Panc1 (cell line): ENCODE measurements at regions of chr10 and their contacts with region 1.

Region 1: DNA sequence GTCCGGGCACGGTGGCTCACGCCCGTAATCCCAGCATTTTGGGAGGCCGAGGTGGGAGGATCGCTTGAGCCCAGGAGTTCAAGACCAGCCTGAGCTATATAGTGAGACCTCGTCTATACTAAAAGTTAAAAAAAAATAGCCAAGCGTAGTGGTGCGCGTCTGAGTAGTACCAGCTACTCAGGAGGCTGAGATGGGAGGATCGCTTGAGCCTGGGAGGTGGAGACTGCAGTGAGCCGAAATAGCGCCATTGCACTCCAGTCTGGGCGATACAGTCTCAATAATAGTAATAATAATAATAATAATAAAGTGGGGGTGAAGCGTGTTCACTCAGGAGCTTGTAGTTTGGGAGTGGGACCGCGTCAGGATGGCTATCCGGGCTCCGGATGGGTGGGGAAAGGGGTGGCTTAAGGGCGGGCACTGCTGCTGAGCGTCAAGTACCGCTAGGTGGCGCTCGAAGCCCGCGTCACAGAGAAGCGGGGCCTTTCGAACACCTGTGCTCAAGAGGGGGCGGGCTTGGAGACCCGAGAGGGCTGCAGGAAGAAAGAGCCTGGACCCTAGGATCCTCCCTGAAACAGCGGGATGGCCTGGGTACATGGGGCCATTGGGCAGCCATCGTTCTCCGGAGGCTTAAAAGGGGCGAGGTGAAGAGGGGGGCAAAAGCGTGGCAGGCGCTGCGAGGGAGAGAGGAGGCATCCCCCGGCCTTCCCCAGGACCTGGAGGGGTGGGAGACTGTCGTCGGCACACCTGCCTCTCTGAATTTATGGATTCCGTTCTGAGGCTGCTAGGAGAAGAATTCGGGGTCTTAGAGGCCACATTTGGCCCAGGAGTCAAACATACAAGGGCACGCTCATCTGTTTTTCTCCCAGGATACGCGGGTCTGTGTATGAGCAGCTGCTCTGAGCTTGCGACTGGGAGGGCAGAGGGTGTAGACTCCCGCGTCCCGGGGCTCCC is 14.5 kb downstream of the LBX1 start:
- DNase-seq: no peak
- ATAC-seq: peak; percentile 90
- H3K4me3 ChIP-seq: peak overlapping the region; percentile 46 to 68
- H3K27ac ChIP-seq: no peak overlapping the region
- H3K4me1 ChIP-seq: peaks cover 4% of the 10 kb centered on the region; the same call in 1 of the 2 replicates
- H3K27me3 ChIP-seq: peaks cover 12% of the 10 kb centered on the region
- CTCF ChIP-seq: peak; percentile 98

Region 2: DNA sequence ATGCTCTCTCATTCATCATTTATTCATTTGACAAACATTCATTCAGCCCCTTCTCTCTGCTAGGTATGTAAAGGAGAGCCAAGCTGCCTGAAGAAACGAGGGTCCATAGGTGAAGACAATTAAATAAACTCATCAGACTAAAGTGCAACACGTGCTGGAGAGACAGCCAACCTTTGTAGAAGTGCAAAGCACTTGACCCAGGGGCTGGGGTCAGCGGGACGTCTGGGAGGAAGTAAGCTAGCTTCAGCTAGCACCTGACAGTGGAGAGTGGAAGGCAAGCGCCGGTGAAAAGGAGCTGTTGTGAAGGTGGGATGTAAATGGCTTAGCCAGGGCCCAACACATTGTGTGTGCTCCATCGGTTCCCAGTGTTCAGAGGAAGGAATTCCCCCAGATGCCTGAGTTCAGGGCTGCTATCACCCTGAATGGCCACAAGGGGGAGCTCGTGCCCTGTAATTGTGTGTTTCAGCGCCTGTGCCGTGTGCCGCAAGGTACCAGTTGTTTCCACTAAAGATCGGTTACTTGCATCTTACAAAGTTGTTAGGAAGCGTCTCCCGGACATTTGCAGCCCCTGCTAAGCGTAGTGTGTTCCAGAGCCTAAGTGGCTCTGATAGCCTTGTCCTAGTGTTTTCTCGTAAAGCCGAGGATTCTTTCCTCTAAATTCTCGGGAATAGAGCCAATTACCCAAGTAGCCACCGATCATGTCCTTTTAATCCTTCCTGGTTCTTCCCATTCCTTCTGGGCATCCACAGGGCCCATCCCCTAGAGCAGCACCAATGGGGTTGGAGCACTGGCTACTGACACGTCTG is 53.0 kb before region 1 on chr10:
- CTCF ChIA-PET with region 1: interaction called, 5 read pairs
- POLR2A ChIA-PET with region 1: no interaction called
- in situ Hi-C with region 1: no loop called
- intact Hi-C with region 1: loop called (anchors 5 kb)
- DNase-seq: peak; percentile 72
- ATAC-seq: peak; percentile 96
- H3K4me3 ChIP-seq: peak overlapping the region; percentile 30 to 62
- H3K27ac ChIP-seq: no peak overlapping the region
- H3K4me1 ChIP-seq: peaks cover 12% of the 10 kb centered on the region; the same call in 1 of the 2 replicates
- H3K27me3 ChIP-seq: peaks cover 19% of the 10 kb centered on the region
- CTCF ChIP-seq: peak; percentile 98

Region 3: GRCh38 chr10:101291331-101292193 is 76.8 kb after region 1 on chr10:
- CTCF ChIA-PET with region 1: interaction called, 46 read pairs
- POLR2A ChIA-PET with region 1: no interaction called
- in situ Hi-C with region 1: no loop called
- intact Hi-C with region 1: loop called (anchors 1 kb)
- DNase-seq: no peak
- ATAC-seq: peak; percentile 88
- H3K4me3 ChIP-seq: peak overlapping the region; percentile 43 to 56
- H3K27ac ChIP-seq: no peak overlapping the region
- H3K4me1 ChIP-seq: no peaks in the 10 kb centered on the region
- H3K27me3 ChIP-seq: peaks cover 2% of the 10 kb centered on the region; the same call in 1 of the 2 replicates
- CTCF ChIP-seq: peak; percentile 95

Region 4: GRCh38 chr10:101441541-101442455 is 227.1 kb after region 1 on chr10:
- CTCF ChIA-PET with region 1: interaction called, 15 read pairs
- POLR2A ChIA-PET with region 1: no interaction called
- in situ Hi-C with region 1: no loop called
- intact Hi-C with region 1: loop called (anchors 5 kb)
- DNase-seq: peak; percentile 54
- ATAC-seq: peak; percentile 97
- H3K4me3 ChIP-seq: no peak overlapping the region
- H3K27ac ChIP-seq: no peak overlapping the region
- H3K4me1 ChIP-seq: peaks cover 6% of the 10 kb centered on the region; the same call in 1 of the 2 replicates
- H3K27me3 ChIP-seq: no peaks in the 10 kb centered on the region
- CTCF ChIP-seq: peak; percentile 88

Region 5: GRCh38 chr10:101467286-101467770 is 252.6 kb after region 1 on chr10:
- CTCF ChIA-PET with region 1: interaction called, 10 read pairs
- POLR2A ChIA-PET with region 1: no interaction called
- in situ Hi-C with region 1: no loop called
- intact Hi-C with region 1: no loop called
- DNase-seq: peak; percentile 76
- ATAC-seq: peak; percentile 94
- H3K4me3 ChIP-seq: no peak overlapping the region
- H3K27ac ChIP-seq: no peak overlapping the region
- H3K4me1 ChIP-seq: peaks cover 5% of the 10 kb centered on the region; the same call in 1 of the 2 replicates
- H3K27me3 ChIP-seq: no peaks in the 10 kb centered on the region
- CTCF ChIP-seq: peak; percentile 87; the same call in 1 of the 2 replicates

Region 6: GRCh38 chr10:101782811-101783735 is 568.4 kb after region 1 on chr10 and contains the start of gene NPM3:
- CTCF ChIA-PET with region 1: interaction called, 13 read pairs
- POLR2A ChIA-PET with region 1: no interaction called
- in situ Hi-C with region 1: no loop called
- intact Hi-C with region 1: loop called (anchors 10 kb)
- DNase-seq: peak; percentile 41
- ATAC-seq: peak; percentile 84
- H3K4me3 ChIP-seq: peak within 1 kb of the TSS; percentile 83 to 89
- H3K27ac ChIP-seq: peak within 1 kb of the TSS; percentile 94
- H3K4me1 ChIP-seq: peaks cover 39% of the 10 kb centered on the region
- H3K27me3 ChIP-seq: no peaks in the 10 kb centered on the region
- CTCF ChIP-seq: no peak
- total RNA-seq, gene NPM3: 109 TPM